ENCODE measurements at regions of chr2 and their contacts with region 1.

Region 1: GRCh38 chr2:229800997-229801754 is 86.8 kb upstream of the DNER start:
- DNase-seq: peak; percentile 35
- ATAC-seq: peak; percentile 58
- H3K4me3 Mint-ChIP-seq: no peak overlapping the region
- H3K27ac Mint-ChIP-seq: no peak overlapping the region
- H3K4me1 Mint-ChIP-seq: no peaks in the 10 kb centered on the region
- H3K27me3 Mint-ChIP-seq: no peaks in the 10 kb centered on the region
- CTCF ChIP-seq: no peak

Region 2: GRCh38 chr2:229910832-229911412 is 109.7 kb after region 1 on chr2:
- CTCF ChIA-PET with region 1: interaction called, 43 read pairs
- POLR2A ChIA-PET with region 1: interaction called, 4 read pairs
- intact Hi-C with region 1: loop called (anchors 1 kb)
- DNase-seq: no peak
- ATAC-seq: peak; percentile 92
- H3K4me3 Mint-ChIP-seq: peak overlapping the region; percentile 32
- H3K27ac Mint-ChIP-seq: peak overlapping the region; percentile 19
- H3K4me1 Mint-ChIP-seq: peaks cover 58% of the 10 kb centered on the region
- H3K27me3 Mint-ChIP-seq: no peaks in the 10 kb centered on the region
- CTCF ChIP-seq: no peak

Region 3: GRCh38 chr2:230000118-230000841 is 199.1 kb after region 1 on chr2:
- CTCF ChIA-PET with region 1: no interaction called
- POLR2A ChIA-PET with region 1: no interaction called
- intact Hi-C with region 1: loop called (anchors 1 kb)
- DNase-seq: no peak
- ATAC-seq: peak; percentile 76
- H3K4me3 Mint-ChIP-seq: peak overlapping the region; percentile 59
- H3K27ac Mint-ChIP-seq: peak overlapping the region; percentile 27
- H3K4me1 Mint-ChIP-seq: peaks cover 13% of the 10 kb centered on the region
- H3K27me3 Mint-ChIP-seq: no peaks in the 10 kb centered on the region
- CTCF ChIP-seq: no peak

Region 4: GRCh38 chr2:230068016-230068650 is 267.0 kb after region 1 on chr2:
- CTCF ChIA-PET with region 1: interaction called, 3 read pairs
- POLR2A ChIA-PET with region 1: no interaction called
- intact Hi-C with region 1: loop called (anchors 1 kb)
- DNase-seq: peak; percentile 58
- ATAC-seq: peak; percentile 32
- H3K4me3 Mint-ChIP-seq: peak overlapping the region; percentile 90
- H3K27ac Mint-ChIP-seq: peak overlapping the region; percentile 70
- H3K4me1 Mint-ChIP-seq: peaks cover 18% of the 10 kb centered on the region
- H3K27me3 Mint-ChIP-seq: peaks cover 5% of the 10 kb centered on the region
- CTCF ChIP-seq: no peak

Region 5: GRCh38 chr2:230347659-230348305 is 546.6 kb after region 1 on chr2:
- CTCF ChIA-PET with region 1: no interaction called
- POLR2A ChIA-PET with region 1: no interaction called
- intact Hi-C with region 1: no loop called
- DNase-seq: no peak
- ATAC-seq: peak; percentile 74
- H3K4me3 Mint-ChIP-seq: peak overlapping the region; percentile 28
- H3K27ac Mint-ChIP-seq: peak overlapping the region; percentile 81
- H3K4me1 Mint-ChIP-seq: peaks cover 54% of the 10 kb centered on the region
- H3K27me3 Mint-ChIP-seq: no peaks in the 10 kb centered on the region
- CTCF ChIP-seq: no peak

Region 6: GRCh38 chr2:230798769-230799399 is 997.7 kb after region 1 on chr2:
- CTCF ChIA-PET with region 1: interaction called, 11 read pairs
- POLR2A ChIA-PET with region 1: no interaction called
- intact Hi-C with region 1: loop called (anchors 1 kb)
- DNase-seq: no peak
- ATAC-seq: peak; percentile 46
- H3K4me3 Mint-ChIP-seq: no peak overlapping the region
- H3K27ac Mint-ChIP-seq: no peak overlapping the region
- H3K4me1 Mint-ChIP-seq: peaks cover 14% of the 10 kb centered on the region
- H3K27me3 Mint-ChIP-seq: no peaks in the 10 kb centered on the region
- CTCF ChIP-seq: no peak